CD4-positive, alpha-beta memory T cell (primary cell): ENCODE measurements at regions of chr9 and their contacts with region 1.

Region 1: DNA sequence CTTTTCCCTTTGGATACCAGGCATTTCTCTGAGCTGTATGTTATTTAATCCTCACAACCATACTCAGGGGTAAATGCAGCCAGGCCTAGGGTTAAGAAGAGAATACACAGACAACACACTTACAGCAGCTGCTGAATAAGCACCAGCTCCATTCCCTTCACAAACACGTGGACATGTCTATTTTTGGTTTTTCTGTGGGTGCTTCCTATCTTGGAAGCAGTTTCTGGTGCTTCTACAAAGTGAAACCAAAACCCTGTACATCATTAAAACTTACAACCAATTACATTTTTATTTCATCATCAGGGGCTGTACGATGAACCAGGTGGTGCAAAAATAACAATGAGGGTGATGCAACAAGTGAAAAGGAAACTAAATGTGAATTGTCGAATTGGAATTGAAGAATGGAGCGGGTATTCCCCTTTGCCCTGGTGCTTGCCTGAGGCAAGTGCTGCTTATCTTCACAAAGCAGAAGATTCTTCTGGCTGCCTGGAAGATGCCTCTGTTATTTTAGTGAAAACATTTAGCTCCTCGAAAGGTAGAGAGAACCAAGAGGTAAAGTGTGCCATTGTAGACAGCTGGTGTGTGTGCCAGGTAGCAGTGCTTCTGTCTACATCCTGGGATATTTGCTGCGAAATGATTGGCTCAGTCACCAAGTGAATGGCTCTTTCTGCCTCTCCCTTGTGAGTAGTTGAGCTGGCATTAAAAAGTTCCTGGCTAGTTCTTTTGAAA is 18.6 kb upstream of the IFNB1 start:
- DNase-seq: peak; percentile 65 to 81 (median 73)
- H3K4me3 ChIP-seq: peak overlapping the region; percentile 7 to 57
- H3K4me3 Mint-ChIP-seq: peak overlapping the region; percentile 56 to 83 (median 74)
- H3K27ac ChIP-seq: peak overlapping the region; percentile 50
- H3K27ac Mint-ChIP-seq: peak overlapping the region; percentile 83 to 92 (median 90)
- H3K4me1 ChIP-seq: peaks cover 27% of the 10 kb centered on the region
- H3K4me1 Mint-ChIP-seq: peaks cover 28 to 52% (median 36%) of the 10 kb centered on the region in 4 donors
- H3K27me3 ChIP-seq: no peaks in the 10 kb centered on the region
- H3K27me3 Mint-ChIP-seq: no peaks in the 10 kb centered on the region

Region 2: GRCh38 chr9:20997503-20998076 is 98.7 kb before region 1 on chr9:
- CTCF ChIA-PET with region 1: no interaction called
- POLR2A ChIA-PET with region 1: interaction called, 3 read pairs
- intact Hi-C with region 1: loop called (anchors 5 kb)
- DNase-seq: no peak
- H3K4me3 ChIP-seq: no peak overlapping the region
- H3K4me3 Mint-ChIP-seq: peak overlapping the region in 3 of 8 donors; percentile 13 to 68 (median 32)
- H3K27ac ChIP-seq: no peak overlapping the region
- H3K27ac Mint-ChIP-seq: peak overlapping the region; percentile 8 to 88 (median 76)
- H3K4me1 ChIP-seq: peaks cover 37% of the 10 kb centered on the region
- H3K4me1 Mint-ChIP-seq: peaks cover 39 to 53% (median 50%) of the 10 kb centered on the region in 4 donors
- H3K27me3 ChIP-seq: no peaks in the 10 kb centered on the region
- H3K27me3 Mint-ChIP-seq: no peaks in the 10 kb centered on the region

Region 3: GRCh38 chr9:21078717-21079116 is 17.6 kb before region 1 on chr9:
- CTCF ChIA-PET with region 1: interaction called, 3 read pairs
- POLR2A ChIA-PET with region 1: interaction called, 4 read pairs
- intact Hi-C with region 1: loop called (anchors 2 kb)
- DNase-seq: peak in 2 of 5 donors; percentile 11 to 14
- H3K4me3 ChIP-seq: no peak overlapping the region
- H3K4me3 Mint-ChIP-seq: peak overlapping the region in 1 of 8 donors; percentile 37
- H3K27ac ChIP-seq: no peak overlapping the region
- H3K27ac Mint-ChIP-seq: peak overlapping the region in 2 of 7 donors; percentile 34 to 69
- H3K4me1 ChIP-seq: peaks cover 19% of the 10 kb centered on the region
- H3K4me1 Mint-ChIP-seq: peaks cover 13 to 40% (median 25%) of the 10 kb centered on the region in 4 donors
- H3K27me3 ChIP-seq: no peaks in the 10 kb centered on the region
- H3K27me3 Mint-ChIP-seq: peaks cover 0 to 3% of the 10 kb centered on the region in 2 donors

Region 4: GRCh38 chr9:21286659-21287058 is 190.3 kb after region 1 on chr9:
- CTCF ChIA-PET with region 1: no interaction called
- POLR2A ChIA-PET with region 1: no interaction called
- intact Hi-C with region 1: no loop called
- DNase-seq: no peak
- H3K4me3 ChIP-seq: no peak overlapping the region
- H3K4me3 Mint-ChIP-seq: no peak overlapping the region
- H3K27ac ChIP-seq: no peak overlapping the region
- H3K27ac Mint-ChIP-seq: no peak overlapping the region
- H3K4me1 ChIP-seq: no peaks in the 10 kb centered on the region
- H3K4me1 Mint-ChIP-seq: no peaks in the 10 kb centered on the region
- H3K27me3 ChIP-seq: no peaks in the 10 kb centered on the region
- H3K27me3 Mint-ChIP-seq: peaks cover 8 to 9% of the 10 kb centered on the region in 2 donors